T-cell (primary cell): ENCODE measurements at regions of chr11 and their contacts with region 1.

Region 1: GRCh38 chr11:80980221-80980620 is 1539.4 kb upstream of the TENM4 start:
- DNase-seq: no peak
- ATAC-seq: no peak
- H3K4me3 ChIP-seq: no peak overlapping the region
- H3K4me3 Mint-ChIP-seq: no peak overlapping the region
- H3K27ac ChIP-seq: no peak overlapping the region
- H3K27ac Mint-ChIP-seq: no peak overlapping the region
- H3K4me1 ChIP-seq: no peaks in the 10 kb centered on the region
- H3K4me1 Mint-ChIP-seq: no peaks in the 10 kb centered on the region
- H3K27me3 ChIP-seq: no peaks in the 10 kb centered on the region
- H3K27me3 Mint-ChIP-seq: no peaks in the 10 kb centered on the region

Region 2: DNA sequence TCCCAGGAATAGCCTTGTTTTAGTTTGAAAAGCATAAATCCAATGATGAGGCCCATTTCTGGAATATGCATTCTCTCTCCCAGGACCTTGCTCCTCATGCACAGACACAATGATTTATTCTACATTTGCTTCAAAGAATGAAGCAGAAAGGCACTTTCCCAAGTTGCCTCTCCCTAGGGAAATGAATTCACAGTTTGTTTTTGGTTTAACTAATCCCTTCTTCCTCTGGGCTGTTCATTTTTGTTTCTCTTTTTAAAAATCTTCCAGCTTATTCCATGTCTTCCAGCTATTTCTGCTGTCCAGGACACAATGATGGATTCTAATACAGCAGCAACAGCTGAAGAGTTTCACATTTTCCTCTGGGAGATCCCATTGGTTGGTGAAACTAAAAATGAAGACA is 10.2 kb before region 1 on chr11:
- CTCF ChIA-PET with region 1: no interaction called
- POLR2A ChIA-PET with region 1: interaction called in 1 of 2 experiments, 10 read pairs
- DNase-seq: no peak
- ATAC-seq: no peak
- H3K4me3 ChIP-seq: no peak overlapping the region
- H3K4me3 Mint-ChIP-seq: no peak overlapping the region
- H3K27ac ChIP-seq: no peak overlapping the region
- H3K27ac Mint-ChIP-seq: no peak overlapping the region
- H3K4me1 ChIP-seq: no peaks in the 10 kb centered on the region
- H3K4me1 Mint-ChIP-seq: no peaks in the 10 kb centered on the region
- H3K27me3 ChIP-seq: no peaks in the 10 kb centered on the region
- H3K27me3 Mint-ChIP-seq: no peaks in the 10 kb centered on the region

Region 3: DNA sequence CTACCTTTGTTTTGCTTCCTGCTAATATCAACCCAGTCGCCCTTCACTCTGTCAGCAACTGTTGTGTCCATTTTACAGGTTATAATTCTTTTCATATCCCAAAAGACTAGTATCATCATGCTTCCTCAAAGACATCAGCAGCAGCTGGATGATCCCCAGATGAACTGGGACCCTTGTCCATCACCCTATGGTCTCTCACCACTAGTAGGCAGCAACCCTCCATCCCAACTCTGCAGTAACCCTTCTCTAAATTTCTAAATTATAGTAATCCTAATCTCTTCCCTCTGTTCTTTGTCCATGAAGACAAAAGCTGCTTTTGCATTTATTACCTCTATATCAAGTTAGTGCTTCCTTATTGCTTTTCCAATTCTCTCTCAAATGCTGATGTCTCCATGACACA is 727.7 kb after region 1 on chr11:
- CTCF ChIA-PET with region 1: no interaction called
- POLR2A ChIA-PET with region 1: no interaction called
- DNase-seq: peak in 1 of 35 experiments; percentile 1
- ATAC-seq: no peak
- H3K4me3 ChIP-seq: no peak overlapping the region
- H3K4me3 Mint-ChIP-seq: no peak overlapping the region
- H3K27ac ChIP-seq: no peak overlapping the region
- H3K27ac Mint-ChIP-seq: no peak overlapping the region
- H3K4me1 ChIP-seq: no peaks in the 10 kb centered on the region
- H3K4me1 Mint-ChIP-seq: no peaks in the 10 kb centered on the region
- H3K27me3 ChIP-seq: peaks cover 0 to 4% of the 10 kb centered on the region in 2 experiments
- H3K27me3 Mint-ChIP-seq: peaks cover 3 to 13% of the 10 kb centered on the region in 2 donors